Testis (tissue), 5 donors: ENCODE measurements at regions of chr16 and their contacts with region 1.

Region 1: GRCh38 chr16:64724339-64724738 is 397.5 kb downstream of the CDH11 start:
- DNase-seq: no peak
- H3K4me3 ChIP-seq: no peak overlapping the region
- H3K27ac ChIP-seq: no peak overlapping the region
- H3K4me1 ChIP-seq: no peaks in the 10 kb centered on the region
- H3K27me3 ChIP-seq: no peaks in the 10 kb centered on the region
- CTCF ChIP-seq: no peak
- POLR2A ChIP-seq: no peak

Region 2: GRCh38 chr16:64809876-64810629 is 85.7 kb after region 1 on chr16:
- intact Hi-C with region 1: no loop called
- DNase-seq: no peak
- H3K4me3 ChIP-seq: no peak overlapping the region
- H3K27ac ChIP-seq: no peak overlapping the region
- H3K4me1 ChIP-seq: no peaks in the 10 kb centered on the region
- H3K27me3 ChIP-seq: no peaks in the 10 kb centered on the region
- CTCF ChIP-seq: no peak
- POLR2A ChIP-seq: no peak

Region 3: DNA sequence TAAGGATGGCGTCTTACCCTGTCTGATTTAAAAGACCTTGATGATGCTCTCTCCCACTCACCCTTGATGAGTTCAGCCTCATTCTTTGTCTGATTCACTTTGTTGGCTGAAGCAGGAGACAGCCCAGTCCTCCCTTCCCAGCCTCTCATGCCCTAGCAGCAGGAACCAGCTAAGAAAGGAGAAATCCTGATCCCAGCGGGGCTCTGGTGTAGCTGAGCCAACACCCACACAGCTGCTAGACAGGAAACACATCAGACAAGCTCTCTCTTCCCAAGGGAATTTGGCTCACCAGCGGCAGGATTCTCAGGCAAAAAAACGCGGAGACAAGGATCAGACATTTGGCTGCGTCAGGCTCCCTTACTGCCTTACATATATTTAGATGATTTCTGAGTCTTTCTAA is 186.0 kb after region 1 on chr16:
- intact Hi-C with region 1: loop called (anchors 5 kb)
- DNase-seq: peak; percentile 31
- H3K4me3 ChIP-seq: no peak overlapping the region
- H3K27ac ChIP-seq: no peak overlapping the region
- H3K4me1 ChIP-seq: peaks cover 20% of the 10 kb centered on the region
- H3K27me3 ChIP-seq: no peaks in the 10 kb centered on the region
- CTCF ChIP-seq: no peak
- POLR2A ChIP-seq: no peak